Right cardiac atrium (tissue), 5 donors: ENCODE measurements at regions of chr19 and their contacts with region 1.

Region 1: GRCh38 chr19:10269333-10270179 is 1.4 kb upstream of the ICAM1 start:
- DNase-seq: peak; percentile 91 to 96 (median 96)
- ATAC-seq: peak; percentile 83 to 85
- H3K4me3 ChIP-seq: peak overlapping the region; percentile 33
- H3K27ac ChIP-seq: peak overlapping the region; percentile 81
- H3K4me1 ChIP-seq: no peaks in the 10 kb centered on the region
- H3K27me3 ChIP-seq: no peaks in the 10 kb centered on the region

Region 2: GRCh38 chr19:10206226-10206885 is 63.2 kb before region 1 on chr19:
- intact Hi-C with region 1: no loop called
- DNase-seq: no peak
- ATAC-seq: no peak
- H3K4me3 ChIP-seq: no peak overlapping the region
- H3K27ac ChIP-seq: no peak overlapping the region
- H3K4me1 ChIP-seq: no peaks in the 10 kb centered on the region
- H3K27me3 ChIP-seq: no peaks in the 10 kb centered on the region

Region 3: DNA sequence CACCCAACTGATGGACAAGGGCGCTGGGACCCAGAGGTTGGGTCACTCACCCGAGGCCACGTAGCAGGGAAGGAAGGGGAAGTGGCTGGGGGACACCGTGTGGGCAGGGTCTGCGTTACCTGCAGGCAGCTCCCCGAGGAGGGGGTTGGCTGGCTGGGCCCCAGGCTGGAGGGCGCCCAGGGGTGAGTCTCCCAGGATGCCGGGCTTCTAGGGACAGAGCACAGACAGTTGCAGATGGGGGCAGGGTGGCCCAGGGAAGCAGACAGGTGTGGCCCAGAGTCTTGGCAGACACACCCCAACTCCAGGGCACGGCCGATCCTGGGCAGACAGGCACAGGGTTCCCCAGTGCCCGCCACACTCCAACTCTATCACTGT is 51.8 kb after region 1 on chr19:
- intact Hi-C with region 1: loop called in 1 of 4 experiments (anchors 10 kb)
- DNase-seq: no peak
- ATAC-seq: no peak
- H3K4me3 ChIP-seq: no peak overlapping the region
- H3K27ac ChIP-seq: no peak overlapping the region
- H3K4me1 ChIP-seq: no peaks in the 10 kb centered on the region
- H3K27me3 ChIP-seq: no peaks in the 10 kb centered on the region

Region 4: DNA sequence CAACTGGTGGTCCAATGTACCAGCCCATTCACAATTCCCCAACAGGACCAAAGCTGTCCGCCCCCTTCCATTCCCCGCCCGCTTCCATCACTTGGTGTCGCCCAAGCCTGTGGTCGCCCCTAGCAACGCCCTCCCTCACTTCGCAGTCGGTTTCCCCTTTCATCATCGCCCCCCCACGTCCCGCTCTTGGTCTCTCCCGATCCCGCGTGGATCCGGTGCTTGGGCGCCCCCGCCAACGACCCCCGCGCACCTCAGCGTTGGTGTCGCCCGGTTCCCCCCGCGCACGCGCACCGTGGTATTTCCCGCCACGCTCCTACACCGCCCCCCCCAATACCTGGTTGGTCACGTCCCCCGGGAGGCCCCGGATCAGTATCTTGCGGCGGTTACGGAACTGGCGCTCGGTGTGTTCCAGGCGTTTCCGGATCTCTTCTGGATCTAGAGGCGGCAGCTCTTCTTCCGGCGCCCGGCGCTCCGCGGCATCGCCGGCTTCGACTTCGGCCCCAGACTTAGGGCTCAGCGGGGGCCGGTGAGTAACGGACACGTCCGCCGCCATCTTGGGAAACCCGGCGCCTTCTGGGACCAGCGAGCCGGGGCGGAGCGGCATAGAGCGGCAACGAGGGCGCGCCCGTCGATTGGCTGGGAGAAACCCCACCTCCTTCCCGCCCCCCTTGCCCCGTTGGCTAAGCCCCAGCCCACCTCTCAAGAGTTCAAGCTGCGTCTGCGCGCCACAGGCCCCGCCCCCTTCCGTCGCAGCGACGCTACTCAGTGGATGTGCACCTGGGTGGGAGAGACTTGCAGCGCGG is 63.6 kb after region 1 on chr19 and contains the start of gene RAVER1:
- intact Hi-C with region 1: loop called in 2 of 4 experiments (anchors 10 kb)
- DNase-seq: peak; percentile 98 to 99 (median 99)
- ATAC-seq: peak; percentile 94
- H3K4me3 ChIP-seq: peak within 1 kb of the TSS; percentile 63
- H3K27ac ChIP-seq: peak within 1 kb of the TSS; percentile 65
- H3K4me1 ChIP-seq: no peaks in the 10 kb centered on the region
- H3K27me3 ChIP-seq: no peaks in the 10 kb centered on the region
- total RNA-seq, gene RAVER1: 13.9 to 20.1 (median 15.1) TPM

Region 5: DNA sequence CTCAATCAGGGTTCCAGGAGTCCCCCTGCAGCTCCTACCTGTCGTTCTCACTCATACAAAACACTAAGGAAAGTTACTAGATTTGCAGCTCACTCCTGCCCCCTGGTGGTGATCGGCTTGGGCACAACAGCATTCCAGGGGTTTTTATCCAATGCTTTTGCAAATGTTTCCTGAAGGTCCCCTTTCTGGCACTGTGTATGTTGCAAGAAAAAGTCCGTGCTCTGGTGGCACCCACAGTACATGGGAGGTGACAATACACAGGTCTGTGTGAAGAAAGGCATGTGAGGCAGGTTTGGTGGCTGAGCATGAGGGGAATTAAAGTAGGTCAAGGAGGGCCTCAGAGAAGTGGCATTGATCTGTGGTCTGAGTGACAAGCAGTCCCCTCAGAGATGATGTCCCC is 119.4 kb after region 1 on chr19:
- intact Hi-C with region 1: loop called (anchors 2 kb)
- DNase-seq: peak; percentile 85 to 96 (median 92)
- ATAC-seq: peak; percentile 62 to 68
- H3K4me3 ChIP-seq: no peak overlapping the region
- H3K27ac ChIP-seq: no peak overlapping the region
- H3K4me1 ChIP-seq: no peaks in the 10 kb centered on the region
- H3K27me3 ChIP-seq: no peaks in the 10 kb centered on the region

Region 6: GRCh38 chr19:10730923-10731322 is 461.4 kb after region 1 on chr19:
- intact Hi-C with region 1: no loop called
- DNase-seq: no peak
- ATAC-seq: peak; percentile 27 to 52
- H3K4me3 ChIP-seq: no peak overlapping the region
- H3K27ac ChIP-seq: no peak overlapping the region
- H3K4me1 ChIP-seq: peaks cover 13% of the 10 kb centered on the region
- H3K27me3 ChIP-seq: no peaks in the 10 kb centered on the region